Heart left ventricle (tissue), 16 donors: ENCODE measurements at regions of chr9 and their contacts with region 1.

Region 1: DNA sequence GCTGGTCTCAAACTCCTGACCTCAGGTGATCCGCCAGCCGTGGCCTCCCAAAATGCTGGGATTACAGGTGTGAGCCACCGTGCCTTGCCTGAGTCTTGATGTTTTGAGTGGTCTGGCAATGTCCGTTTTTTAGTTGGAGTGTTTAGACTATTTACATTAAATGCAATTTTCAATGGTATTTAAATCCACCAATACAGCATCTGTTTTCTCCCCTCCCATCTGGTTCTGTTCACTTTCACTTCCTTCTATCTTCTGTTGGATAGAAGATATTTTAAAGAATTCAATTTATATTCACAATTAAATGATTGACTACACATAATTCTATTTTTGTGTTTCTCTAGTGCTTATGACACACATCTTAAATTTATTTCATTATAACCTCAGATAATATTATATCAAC is 26.0 kb upstream of the PCAT7 start:
- DNase-seq: no peak
- ATAC-seq: no peak
- H3K4me3 ChIP-seq: no peak overlapping the region
- H3K27ac ChIP-seq: no peak overlapping the region
- H3K4me1 ChIP-seq: no peaks in the 10 kb centered on the region
- H3K27me3 ChIP-seq: peaks cover 0 to 6% (median 0%) of the 10 kb centered on the region in 9 donors
- CTCF ChIP-seq: no peak
- POLR2A ChIP-seq: no peak

Region 2: DNA sequence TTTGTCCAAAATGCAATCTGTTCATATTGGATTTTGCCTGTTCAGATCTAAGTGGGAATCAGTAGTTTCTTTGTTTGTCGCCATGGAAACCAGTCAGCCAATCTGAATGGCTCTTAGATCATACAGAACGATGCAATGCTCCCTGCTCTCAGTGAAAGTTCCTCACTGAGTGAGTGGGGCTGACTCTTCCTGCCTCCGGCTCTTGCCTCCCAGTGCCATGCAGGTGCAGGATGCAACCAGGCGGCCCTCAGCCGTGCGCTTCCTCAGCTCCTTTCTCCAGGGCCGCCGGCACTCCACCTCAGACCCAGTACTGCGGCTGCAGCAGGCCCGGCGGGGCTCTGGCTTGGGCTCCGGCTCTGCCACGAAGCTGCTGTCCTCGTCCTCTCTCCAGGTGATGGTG is 444.6 kb before region 1 on chr9 and contains the start of gene PTPDC1:
- intact Hi-C with region 1: no loop called
- DNase-seq: peak in 1 of 5 donors; percentile 21
- ATAC-seq: peak in 3 of 4 donors; percentile 42 to 54 (median 52)
- H3K4me3 ChIP-seq: peak within 1 kb of the TSS in 5 of 12 donors; percentile 16 to 43 (median 26)
- H3K27ac ChIP-seq: peak within 1 kb of the TSS in 9 of 12 donors; percentile 15 to 76 (median 53)
- H3K4me1 ChIP-seq: peaks cover 0 to 45% (median 31%) of the 10 kb centered on the region in 12 donors
- H3K27me3 ChIP-seq: no peaks in the 10 kb centered on the region
- CTCF ChIP-seq: no peak
- POLR2A ChIP-seq: no peak
- total RNA-seq, gene PTPDC1: 6.4 to 12.3 (median 9.5) TPM

Region 3: GRCh38 chr9:94586814-94587213 is 57.9 kb after region 1 on chr9:
- intact Hi-C with region 1: loop called in 1 of 10 experiments (anchors 10 kb)
- DNase-seq: no peak
- ATAC-seq: no peak
- H3K4me3 ChIP-seq: peak overlapping the region in 1 of 12 donors; percentile 20
- H3K27ac ChIP-seq: no peak overlapping the region
- H3K4me1 ChIP-seq: no peaks in the 10 kb centered on the region
- H3K27me3 ChIP-seq: peaks cover 0 to 14% (median 0%) of the 10 kb centered on the region in 9 donors
- CTCF ChIP-seq: no peak
- POLR2A ChIP-seq: no peak